AG04450 (cell line): ENCODE measurements at regions of chr4 and their contacts with region 1.

Region 1: GRCh38 chr4:169314906-169315305 is 44.1 kb upstream of the SH3RF1 start:
- DNase-seq: no peak
- H3K4me3 ChIP-seq: no peak overlapping the region
- H3K27ac ChIP-seq: no peak overlapping the region
- H3K27me3 ChIP-seq: no peaks in the 10 kb centered on the region
- CTCF ChIP-seq: no peak

Region 2: DNA sequence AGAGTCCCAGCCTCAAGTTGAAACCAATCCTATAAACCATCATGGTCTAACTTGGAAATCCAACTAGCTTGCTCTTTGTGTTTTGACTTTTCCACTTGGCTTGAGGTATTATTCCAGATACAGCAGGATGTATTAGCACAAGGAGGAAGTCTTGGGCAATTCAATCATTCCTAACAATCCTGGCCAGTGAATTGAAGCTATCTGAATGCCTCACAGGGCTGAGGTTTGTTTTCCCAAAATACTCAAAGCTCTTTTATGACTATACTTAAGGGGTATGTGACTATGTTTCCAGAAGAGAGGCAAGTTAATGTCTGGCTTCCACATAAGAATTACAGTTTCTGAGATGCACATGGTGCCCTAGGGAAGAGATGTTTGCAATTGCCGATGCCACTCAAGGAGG is 22.6 kb after region 1 on chr4:
- CTCF ChIA-PET with region 1: interaction called, 3 read pairs
- POLR2A ChIA-PET with region 1: interaction called, 10 read pairs
- DNase-seq: peak; percentile 86
- H3K4me3 ChIP-seq: no peak overlapping the region
- H3K27ac ChIP-seq: peak overlapping the region; percentile 89
- H3K27me3 ChIP-seq: no peaks in the 10 kb centered on the region
- CTCF ChIP-seq: no peak